Ascending aorta (tissue), 2 donors: ENCODE measurements at regions of chr6 and their contacts with region 1.

Region 1: GRCh38 chr6:27893059-27893835 is 18.9 kb downstream of the OR2B2 start:
- DNase-seq: peak in 1 of 2 donors; percentile 88
- H3K4me3 ChIP-seq: peak overlapping the region; percentile 61 to 88
- H3K27ac ChIP-seq: peak overlapping the region; percentile 57 to 58
- H3K4me1 ChIP-seq: peaks cover 0 to 10% of the 10 kb centered on the region in 2 donors
- H3K27me3 ChIP-seq: no peaks in the 10 kb centered on the region
- CTCF ChIP-seq: no peak

Region 2: GRCh38 chr6:27388293-27389197 is 504.7 kb before region 1 on chr6 and contains the start of gene ZNF391:
- intact Hi-C with region 1: loop called (anchors 10 kb)
- DNase-seq: peak; percentile 17 to 88
- H3K4me3 ChIP-seq: peak within 1 kb of the TSS; percentile 68
- H3K27ac ChIP-seq: peak within 1 kb of the TSS; percentile 56 to 62
- H3K4me1 ChIP-seq: peaks cover 0 to 4% of the 10 kb centered on the region in 2 donors
- H3K27me3 ChIP-seq: no peaks in the 10 kb centered on the region
- CTCF ChIP-seq: no peak
- total RNA-seq, gene ZNF391: 0.75 TPM

Region 3: DNA sequence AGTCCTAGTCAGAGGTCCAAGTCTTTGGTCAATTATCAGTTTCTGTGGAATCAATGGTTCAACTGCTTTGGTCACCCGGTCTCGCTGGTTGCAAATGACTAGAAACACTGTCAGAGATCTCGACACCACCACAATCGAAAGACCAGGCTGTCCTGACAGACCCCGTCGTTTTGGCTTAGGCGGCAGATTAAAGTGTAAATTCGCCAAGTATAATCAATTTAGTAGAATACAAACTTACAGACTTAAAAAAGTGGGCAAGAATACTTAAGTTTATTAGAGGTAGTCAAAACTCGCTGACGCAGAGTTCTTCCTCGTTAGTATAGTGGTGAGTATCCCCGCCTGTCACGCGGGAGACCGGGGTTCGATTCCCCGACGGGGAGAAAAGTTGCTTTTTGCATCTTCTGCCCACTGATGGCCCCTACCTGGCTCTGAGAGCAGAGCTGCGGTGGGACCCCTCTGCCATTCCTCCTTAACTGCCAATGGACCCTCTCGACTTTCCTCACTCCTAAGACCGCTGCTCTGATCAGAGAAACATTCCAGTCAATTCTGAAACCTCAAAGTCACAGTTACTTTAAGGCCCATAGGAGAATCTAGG is 389.7 kb before region 1 on chr6:
- intact Hi-C with region 1: loop called (anchors 5 kb)
- DNase-seq: peak in 1 of 2 donors; percentile 78
- H3K4me3 ChIP-seq: peak overlapping the region; percentile 49 to 59
- H3K27ac ChIP-seq: peak overlapping the region in 1 of 2 donors; percentile 31
- H3K4me1 ChIP-seq: no peaks in the 10 kb centered on the region
- H3K27me3 ChIP-seq: no peaks in the 10 kb centered on the region
- CTCF ChIP-seq: no peak

Region 4: DNA sequence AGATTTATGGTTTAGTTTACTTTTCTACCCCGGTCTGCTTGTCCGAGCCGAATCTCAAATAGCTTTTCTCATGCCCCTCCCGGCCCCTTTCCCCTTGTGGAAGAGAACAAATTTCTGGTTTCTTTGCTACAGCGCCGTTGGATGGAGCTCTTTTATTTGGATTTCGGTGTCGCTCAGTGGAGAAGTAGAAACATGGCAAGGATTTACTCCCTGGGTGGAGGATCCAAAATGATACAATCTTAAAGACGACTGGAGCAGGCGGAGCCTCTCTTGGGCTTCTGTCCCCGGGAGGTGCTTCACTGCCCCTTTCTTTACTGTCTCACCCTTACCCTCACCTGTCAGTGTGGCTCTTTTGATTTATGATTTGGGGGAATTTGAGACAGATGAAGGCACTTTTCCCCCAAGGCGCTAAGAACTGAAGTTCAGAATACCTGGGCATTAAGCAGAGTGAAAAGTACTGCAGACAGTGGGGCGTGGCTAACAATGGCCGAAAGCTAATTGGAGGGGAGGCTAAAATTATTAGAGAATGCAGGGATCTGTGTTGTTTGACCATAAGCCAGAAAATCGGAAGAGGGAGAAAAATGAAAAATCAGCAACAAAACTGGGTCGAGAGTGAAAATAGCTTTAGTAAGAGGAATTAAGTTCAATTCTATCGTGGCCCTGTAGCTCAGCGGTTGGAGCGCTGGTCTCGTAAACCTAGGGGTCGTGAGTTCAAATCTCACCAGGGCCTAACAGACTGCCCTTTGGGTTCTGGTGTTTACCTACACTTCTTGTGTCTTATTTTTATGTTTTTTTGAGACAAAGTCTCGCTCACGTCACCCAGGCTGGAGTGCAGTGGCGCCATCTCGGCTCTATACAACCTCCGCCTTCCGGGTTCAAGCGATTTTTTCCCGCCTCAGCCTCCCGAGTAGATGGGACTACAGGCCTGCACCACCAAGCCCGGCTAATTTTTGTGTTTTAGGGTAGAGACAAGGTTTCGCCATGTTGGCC is 275.3 kb before region 1 on chr6:
- intact Hi-C with region 1: no loop called
- DNase-seq: no peak
- H3K4me3 ChIP-seq: peak overlapping the region; percentile 26 to 33
- H3K27ac ChIP-seq: no peak overlapping the region
- H3K4me1 ChIP-seq: peaks cover 0 to 3% of the 10 kb centered on the region in 2 donors
- H3K27me3 ChIP-seq: no peaks in the 10 kb centered on the region
- CTCF ChIP-seq: no peak

Region 5: DNA sequence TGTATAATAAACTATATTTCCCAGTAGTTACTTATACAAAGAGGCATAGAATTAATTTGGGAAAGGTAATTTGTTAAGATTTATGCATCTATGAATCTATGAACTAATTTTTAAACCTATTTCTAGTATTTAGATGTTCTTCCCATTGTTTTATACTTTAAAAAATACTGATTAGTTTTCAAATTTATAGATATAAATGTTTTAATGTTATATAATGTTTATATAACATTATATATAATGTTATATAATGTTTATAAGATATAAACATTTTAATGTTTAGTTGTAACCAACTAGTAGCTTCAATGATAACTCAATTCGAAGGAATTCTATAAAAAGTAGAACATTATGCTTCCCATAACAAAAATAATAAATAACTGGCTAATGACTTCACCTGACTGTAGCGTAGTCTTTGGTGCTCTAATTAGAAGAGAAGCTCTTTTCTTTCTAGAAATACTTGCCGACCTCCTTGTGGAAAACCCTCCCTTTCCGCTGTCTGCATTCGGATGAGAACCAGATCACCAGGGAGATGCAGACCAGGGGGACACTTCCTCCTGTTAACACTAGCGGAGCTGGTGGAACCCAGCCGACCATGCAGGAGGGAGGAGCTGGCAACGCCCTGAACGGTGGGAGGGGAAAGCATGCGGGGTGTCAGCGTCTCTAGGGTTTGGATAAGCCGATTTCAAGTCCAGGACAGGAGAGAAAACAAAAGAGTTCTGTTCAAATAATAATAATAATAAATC is 139.4 kb before region 1 on chr6:
- intact Hi-C with region 1: loop called (anchors 1 kb)
- DNase-seq: peak in 1 of 2 donors; percentile 81
- H3K4me3 ChIP-seq: peak overlapping the region; percentile 32 to 93
- H3K27ac ChIP-seq: no peak overlapping the region
- H3K4me1 ChIP-seq: peaks cover 0 to 3% of the 10 kb centered on the region in 2 donors
- H3K27me3 ChIP-seq: peaks cover 5% of the 10 kb centered on the region
- CTCF ChIP-seq: no peak

Region 6: GRCh38 chr6:27809939-27810767 is 83.1 kb before region 1 on chr6:
- intact Hi-C with region 1: loop called (anchors 5 kb)
- DNase-seq: peak in 1 of 2 donors; percentile 86
- H3K4me3 ChIP-seq: peak overlapping the region; percentile 65 to 87
- H3K27ac ChIP-seq: peak overlapping the region; percentile 82 to 92
- H3K4me1 ChIP-seq: peaks cover 5 to 6% of the 10 kb centered on the region in 2 donors
- H3K27me3 ChIP-seq: no peaks in the 10 kb centered on the region
- CTCF ChIP-seq: peak in 1 of 3 experiments; percentile 13

Region 7: GRCh38 chr6:27871924-27872638 is 21.2 kb before region 1 on chr6:
- intact Hi-C with region 1: loop called (anchors 2 kb)
- DNase-seq: peak; percentile 41 to 88
- H3K4me3 ChIP-seq: peak overlapping the region; percentile 64 to 72
- H3K27ac ChIP-seq: peak overlapping the region; percentile 18 to 71
- H3K4me1 ChIP-seq: peaks cover 0 to 3% of the 10 kb centered on the region in 2 donors
- H3K27me3 ChIP-seq: no peaks in the 10 kb centered on the region
- CTCF ChIP-seq: peak in 1 of 3 experiments; percentile 7